CD8-positive, alpha-beta T cell (primary cell): ENCODE measurements at regions of chr9 and their contacts with region 1.

Region 1: DNA sequence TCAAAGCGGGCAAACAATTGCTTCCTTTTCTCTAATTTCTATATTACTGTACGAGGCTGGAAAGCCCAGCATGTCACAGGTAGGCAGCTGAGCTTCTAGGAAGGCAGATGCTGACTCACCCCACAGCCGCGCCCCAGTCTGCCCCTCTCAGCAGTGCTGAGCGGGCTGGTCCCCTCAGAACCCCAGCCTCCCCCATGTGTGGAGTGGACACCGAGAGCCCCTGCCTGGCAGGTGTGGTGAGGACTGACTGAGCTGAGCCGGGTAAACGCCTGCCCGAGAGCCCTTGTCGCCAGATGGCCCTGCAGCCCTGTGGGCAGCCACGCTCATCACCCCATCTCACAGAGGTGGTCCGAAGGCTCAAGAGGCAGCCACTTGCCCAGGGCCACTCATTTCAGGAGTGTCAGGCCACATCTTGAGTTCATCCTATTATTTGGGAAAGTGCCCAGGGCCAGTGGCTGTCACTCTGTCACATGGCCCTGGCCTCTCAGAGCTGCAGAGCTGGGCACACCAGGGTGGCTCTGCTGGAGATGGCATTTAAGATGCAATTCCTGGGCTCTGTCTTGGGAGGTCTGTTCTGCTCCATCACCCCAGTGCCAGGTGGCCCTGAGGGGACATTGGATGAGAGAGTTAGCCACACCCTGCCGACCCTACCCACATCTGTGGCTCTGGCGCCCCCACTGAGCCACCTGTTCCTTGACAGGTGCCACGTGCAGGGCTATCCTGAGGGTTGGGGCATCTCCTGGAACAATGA is 12.4 kb downstream of the CARD19 start:
- DNase-seq: peak in 1 of 9 experiments; percentile 26
- ATAC-seq: no peak
- H3K4me3 ChIP-seq: no peak overlapping the region
- H3K4me3 Mint-ChIP-seq: no peak overlapping the region
- H3K27ac ChIP-seq: no peak overlapping the region
- H3K27ac Mint-ChIP-seq: no peak overlapping the region
- H3K4me1 ChIP-seq: peaks cover 47% of the 10 kb centered on the region
- H3K4me1 Mint-ChIP-seq: peaks cover 37% of the 10 kb centered on the region
- H3K27me3 ChIP-seq: no peaks in the 10 kb centered on the region
- H3K27me3 Mint-ChIP-seq: no peaks in the 10 kb centered on the region
- CTCF ChIP-seq: no peak

Region 2: GRCh38 chr9:92664361-92665152 is 443.9 kb before region 1 on chr9:
- CTCF ChIA-PET with region 1: no interaction called
- POLR2A ChIA-PET with region 1: no interaction called
- intact Hi-C with region 1: no loop called
- DNase-seq: peak in 7 of 9 experiments; percentile 5 to 84 (median 56)
- ATAC-seq: peak; percentile 85
- H3K4me3 ChIP-seq: no peak overlapping the region
- H3K4me3 Mint-ChIP-seq: peak overlapping the region; percentile 4
- H3K27ac ChIP-seq: peak overlapping the region; percentile 38 to 75
- H3K27ac Mint-ChIP-seq: peak overlapping the region; percentile 80
- H3K4me1 ChIP-seq: peaks cover 30% of the 10 kb centered on the region
- H3K4me1 Mint-ChIP-seq: peaks cover 62% of the 10 kb centered on the region
- H3K27me3 ChIP-seq: no peaks in the 10 kb centered on the region
- H3K27me3 Mint-ChIP-seq: no peaks in the 10 kb centered on the region
- CTCF ChIP-seq: no peak

Region 3: DNA sequence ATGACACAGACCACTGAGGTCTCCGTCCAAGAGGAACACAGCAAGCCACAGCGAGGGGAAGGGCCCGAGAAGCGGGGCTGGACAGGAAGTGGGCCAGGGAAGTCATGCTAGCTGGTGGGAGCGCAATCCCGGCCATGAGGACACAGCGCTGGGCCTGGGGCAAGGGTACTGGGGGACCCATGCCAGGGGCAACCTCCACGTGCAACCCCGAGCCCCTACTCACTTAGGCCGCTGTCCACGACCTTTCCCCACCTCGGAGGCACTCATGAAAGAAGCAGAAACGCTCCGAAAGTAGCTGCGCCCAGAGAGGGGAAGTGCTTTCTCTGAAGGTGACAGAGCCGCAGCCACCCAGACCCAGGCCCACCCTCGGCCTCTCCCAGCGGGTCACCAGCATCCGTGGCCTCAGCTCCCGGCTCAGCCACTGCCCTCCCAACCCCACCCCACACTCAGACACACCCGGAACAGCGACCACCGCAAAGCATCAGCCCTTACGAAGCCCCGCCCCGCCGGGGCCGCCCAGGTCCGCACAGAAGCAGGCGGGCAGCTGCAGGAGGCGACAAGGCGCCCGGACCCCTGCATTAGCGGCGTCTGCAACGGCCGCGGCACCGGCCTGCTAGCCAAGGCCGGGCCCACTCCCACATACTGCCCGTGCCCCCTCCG is 344.6 kb before region 1 on chr9:
- CTCF ChIA-PET with region 1: no interaction called
- POLR2A ChIA-PET with region 1: no interaction called
- intact Hi-C with region 1: no loop called
- DNase-seq: peak in 5 of 9 experiments; percentile 33 to 66 (median 47)
- ATAC-seq: no peak
- H3K4me3 ChIP-seq: peak overlapping the region; percentile 77 to 95
- H3K4me3 Mint-ChIP-seq: peak overlapping the region; percentile 92
- H3K27ac ChIP-seq: peak overlapping the region; percentile 56 to 64
- H3K27ac Mint-ChIP-seq: peak overlapping the region; percentile 83
- H3K4me1 ChIP-seq: peaks cover 34% of the 10 kb centered on the region
- H3K4me1 Mint-ChIP-seq: peaks cover 54% of the 10 kb centered on the region
- H3K27me3 ChIP-seq: no peaks in the 10 kb centered on the region
- H3K27me3 Mint-ChIP-seq: no peaks in the 10 kb centered on the region
- CTCF ChIP-seq: no peak

Region 4: GRCh38 chr9:92954049-92954861 is 154.2 kb before region 1 on chr9:
- CTCF ChIA-PET with region 1: interaction called, 27 read pairs
- POLR2A ChIA-PET with region 1: interaction called, 4 read pairs
- intact Hi-C with region 1: no loop called
- DNase-seq: peak; percentile 53 to 95 (median 87)
- ATAC-seq: peak; percentile 87
- H3K4me3 ChIP-seq: peak overlapping the region; percentile 31 to 39
- H3K4me3 Mint-ChIP-seq: peak overlapping the region; percentile 81
- H3K27ac ChIP-seq: peak overlapping the region; percentile 49 to 71
- H3K27ac Mint-ChIP-seq: peak overlapping the region; percentile 97
- H3K4me1 ChIP-seq: peaks cover 71% of the 10 kb centered on the region
- H3K4me1 Mint-ChIP-seq: peaks cover 79% of the 10 kb centered on the region
- H3K27me3 ChIP-seq: no peaks in the 10 kb centered on the region
- H3K27me3 Mint-ChIP-seq: no peaks in the 10 kb centered on the region
- CTCF ChIP-seq: no peak

Region 5: DNA sequence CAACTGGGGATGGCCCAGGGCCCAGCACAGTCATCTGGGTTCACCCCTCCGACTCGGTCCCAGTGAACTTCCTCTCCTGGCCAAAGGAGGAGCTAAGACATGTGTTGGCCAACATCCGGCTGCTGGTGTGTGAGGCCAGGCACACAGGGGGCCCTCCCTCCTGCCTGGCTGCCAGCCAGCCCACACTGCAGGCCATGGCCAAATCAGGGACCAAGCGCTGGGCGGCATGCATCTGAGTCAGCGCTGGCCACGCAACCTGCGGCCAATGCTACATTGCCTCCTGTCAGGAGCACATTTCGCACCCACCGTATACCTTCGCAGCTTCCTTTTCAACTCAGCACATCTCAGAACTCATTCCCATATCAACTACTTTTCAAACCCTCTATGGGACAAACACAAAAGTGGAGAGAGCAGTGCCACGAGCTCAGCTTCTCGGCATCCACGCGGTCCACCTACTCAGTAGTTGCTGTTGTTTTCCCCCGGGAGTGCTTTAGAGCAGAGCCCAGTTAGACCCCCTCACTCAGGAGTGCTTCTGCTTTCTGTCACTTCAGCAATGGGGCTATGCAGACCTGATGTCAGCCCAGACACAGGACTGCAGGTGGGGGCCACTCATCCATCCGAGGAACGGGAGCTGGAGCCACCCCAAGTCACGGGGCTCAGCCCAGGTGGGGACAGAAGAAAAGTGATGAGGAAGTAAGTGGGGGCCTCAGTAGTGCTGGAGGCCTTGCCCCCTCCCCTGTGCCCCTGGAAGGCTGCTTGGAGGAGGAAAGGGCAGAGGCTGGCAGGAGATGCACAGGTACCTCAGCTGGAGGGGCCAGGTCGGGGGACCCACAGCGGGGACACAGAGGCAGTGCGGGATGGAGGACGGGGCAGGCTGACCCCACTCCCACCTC is 11.7 kb after region 1 on chr9:
- CTCF ChIA-PET with region 1: interaction called, 26 read pairs
- POLR2A ChIA-PET with region 1: no interaction called
- intact Hi-C with region 1: no loop called
- DNase-seq: peak in 5 of 9 experiments; percentile 43 to 80 (median 56)
- ATAC-seq: peak; percentile 64
- H3K4me3 ChIP-seq: no peak overlapping the region
- H3K4me3 Mint-ChIP-seq: peak overlapping the region; percentile 50
- H3K27ac ChIP-seq: peak overlapping the region in 1 of 2 experiments; percentile 54
- H3K27ac Mint-ChIP-seq: peak overlapping the region; percentile 33
- H3K4me1 ChIP-seq: peaks cover 17% of the 10 kb centered on the region
- H3K4me1 Mint-ChIP-seq: peaks cover 31% of the 10 kb centered on the region
- H3K27me3 ChIP-seq: no peaks in the 10 kb centered on the region
- H3K27me3 Mint-ChIP-seq: no peaks in the 10 kb centered on the region
- CTCF ChIP-seq: peak; percentile 21

Region 6: DNA sequence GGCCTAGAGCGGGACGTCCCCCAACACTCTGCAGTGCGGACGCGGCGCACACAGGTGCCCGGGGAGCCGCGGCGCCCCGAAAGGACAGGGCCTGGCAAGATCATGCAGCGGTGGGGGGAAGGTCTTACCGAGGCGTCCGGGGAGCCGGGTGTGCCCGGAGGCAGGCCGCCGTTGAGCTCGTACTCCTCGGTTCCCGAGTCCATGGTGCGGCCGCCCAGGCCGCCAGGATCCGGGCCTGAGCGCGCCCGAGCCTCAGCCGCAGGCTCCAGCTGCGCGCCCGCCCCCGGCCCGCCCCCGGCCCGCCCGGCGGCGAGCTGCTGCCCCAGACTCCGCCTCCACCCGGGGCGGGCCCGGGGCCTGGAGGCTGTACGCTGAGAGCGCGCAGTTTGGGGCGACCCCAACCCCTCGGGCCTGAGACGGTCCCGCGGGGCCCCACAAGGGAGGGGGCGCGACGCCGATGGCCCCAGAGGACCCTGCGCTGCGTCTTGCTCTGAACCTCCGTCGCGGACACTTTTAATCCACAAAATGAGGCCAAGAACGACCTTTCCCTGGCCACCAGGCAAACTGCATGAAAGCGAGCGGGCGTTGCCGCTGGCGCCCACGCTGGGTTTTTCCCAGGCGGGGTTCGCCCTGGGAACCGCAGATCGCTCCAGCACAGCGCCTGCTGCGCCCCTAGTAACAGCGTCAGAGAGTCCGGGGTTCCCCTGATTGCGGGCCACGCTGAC is 25.7 kb after region 1 on chr9 and contains the start of gene NINJ1:
- CTCF ChIA-PET with region 1: interaction called, 12 read pairs
- POLR2A ChIA-PET with region 1: no interaction called
- intact Hi-C with region 1: no loop called
- DNase-seq: peak; percentile 59 to 97 (median 79)
- ATAC-seq: peak; percentile 83
- H3K4me3 ChIP-seq: peak within 1 kb of the TSS; percentile 84 to 89
- H3K4me3 Mint-ChIP-seq: peak within 1 kb of the TSS; percentile 92
- H3K27ac ChIP-seq: peak within 1 kb of the TSS; percentile 85 to 92
- H3K27ac Mint-ChIP-seq: peak within 1 kb of the TSS; percentile 96
- H3K4me1 ChIP-seq: peaks cover 50% of the 10 kb centered on the region
- H3K4me1 Mint-ChIP-seq: peaks cover 56% of the 10 kb centered on the region
- H3K27me3 ChIP-seq: no peaks in the 10 kb centered on the region
- H3K27me3 Mint-ChIP-seq: no peaks in the 10 kb centered on the region
- CTCF ChIP-seq: no peak
- total RNA-seq, gene NINJ1: 214 to 229 TPM

Region 7: DNA sequence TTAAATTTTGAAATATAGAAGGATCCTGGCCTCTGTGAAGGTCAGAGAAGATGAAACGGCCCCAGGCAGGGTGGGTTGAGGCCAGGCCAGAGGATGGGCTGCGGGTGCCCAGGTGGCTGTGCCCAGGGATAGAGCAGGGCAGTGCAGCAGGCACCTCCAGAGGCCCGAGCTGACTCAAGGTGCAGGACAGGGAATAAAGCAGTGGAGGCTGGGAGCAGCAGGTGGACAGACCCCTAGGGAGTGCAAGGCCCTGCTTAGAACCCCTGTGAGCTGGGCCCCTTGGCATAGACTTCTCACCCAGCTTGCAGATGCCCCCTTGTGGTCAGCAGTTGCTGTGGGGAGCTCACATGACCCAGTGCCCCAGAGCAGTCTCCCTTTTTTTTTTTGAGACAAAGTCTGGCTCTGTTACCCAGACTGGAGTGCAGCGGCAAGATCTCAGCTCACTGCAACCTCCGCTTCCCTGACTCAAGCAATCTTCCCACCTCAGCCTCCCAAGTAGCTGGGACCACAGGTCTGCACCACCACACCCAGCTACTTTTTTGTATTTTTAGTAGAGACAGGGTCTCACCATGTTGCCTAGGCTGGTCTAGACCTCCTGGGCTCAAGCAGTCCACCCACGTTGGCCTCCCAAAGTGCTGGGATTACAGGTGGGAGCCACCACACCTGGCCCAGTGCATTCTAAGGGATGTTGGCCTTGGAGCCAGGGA is 194.2 kb after region 1 on chr9:
- CTCF ChIA-PET with region 1: interaction called, 25 read pairs
- POLR2A ChIA-PET with region 1: no interaction called
- intact Hi-C with region 1: loop called (anchors 1 kb)
- DNase-seq: peak; percentile 30 to 79 (median 63)
- ATAC-seq: peak; percentile 92
- H3K4me3 ChIP-seq: no peak overlapping the region
- H3K4me3 Mint-ChIP-seq: no peak overlapping the region
- H3K27ac ChIP-seq: no peak overlapping the region
- H3K27ac Mint-ChIP-seq: no peak overlapping the region
- H3K4me1 ChIP-seq: no peaks in the 10 kb centered on the region
- H3K4me1 Mint-ChIP-seq: no peaks in the 10 kb centered on the region
- H3K27me3 ChIP-seq: no peaks in the 10 kb centered on the region
- H3K27me3 Mint-ChIP-seq: no peaks in the 10 kb centered on the region
- CTCF ChIP-seq: peak; percentile 49